CD4-positive, alpha-beta memory T cell (primary cell): ENCODE measurements at regions of chr12 and their contacts with region 1.

Region 1: GRCh38 chr12:39319187-39319586 is 123.7 kb downstream of the KIF21A start:
- DNase-seq: peak in 1 of 5 donors; percentile 14
- H3K4me3 ChIP-seq: no peak overlapping the region
- H3K4me3 Mint-ChIP-seq: no peak overlapping the region
- H3K27ac ChIP-seq: no peak overlapping the region
- H3K27ac Mint-ChIP-seq: peak overlapping the region in 1 of 7 donors; percentile 47
- H3K4me1 ChIP-seq: no peaks in the 10 kb centered on the region
- H3K4me1 Mint-ChIP-seq: peaks cover 0 to 2% (median 0%) of the 10 kb centered on the region in 4 donors
- H3K27me3 ChIP-seq: no peaks in the 10 kb centered on the region
- H3K27me3 Mint-ChIP-seq: no peaks in the 10 kb centered on the region

Region 2: DNA sequence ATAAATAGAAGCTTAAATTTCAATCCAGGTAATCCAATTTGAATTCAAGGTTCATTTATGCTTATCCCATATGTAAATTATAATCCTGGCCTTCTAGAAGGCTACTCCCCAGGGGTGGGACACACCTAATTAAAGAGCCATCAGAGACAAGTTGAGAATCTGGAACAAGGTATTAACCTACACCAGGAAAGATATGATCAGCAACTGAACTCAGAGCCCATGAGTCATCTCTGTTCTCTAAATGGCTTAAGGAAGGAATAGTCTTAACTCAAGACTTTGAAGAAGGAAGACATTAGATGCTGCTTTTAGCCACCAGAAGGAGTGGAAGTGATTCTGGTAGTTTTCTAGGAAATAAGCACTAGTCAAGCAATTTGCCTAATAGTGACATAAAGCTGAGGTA is 35.8 kb after region 1 on chr12:
- CTCF ChIA-PET with region 1: no interaction called
- POLR2A ChIA-PET with region 1: no interaction called
- intact Hi-C with region 1: no loop called
- DNase-seq: no peak
- H3K4me3 ChIP-seq: no peak overlapping the region
- H3K4me3 Mint-ChIP-seq: no peak overlapping the region
- H3K27ac ChIP-seq: no peak overlapping the region
- H3K27ac Mint-ChIP-seq: no peak overlapping the region
- H3K4me1 ChIP-seq: no peaks in the 10 kb centered on the region
- H3K4me1 Mint-ChIP-seq: no peaks in the 10 kb centered on the region
- H3K27me3 ChIP-seq: no peaks in the 10 kb centered on the region
- H3K27me3 Mint-ChIP-seq: no peaks in the 10 kb centered on the region

Region 3: DNA sequence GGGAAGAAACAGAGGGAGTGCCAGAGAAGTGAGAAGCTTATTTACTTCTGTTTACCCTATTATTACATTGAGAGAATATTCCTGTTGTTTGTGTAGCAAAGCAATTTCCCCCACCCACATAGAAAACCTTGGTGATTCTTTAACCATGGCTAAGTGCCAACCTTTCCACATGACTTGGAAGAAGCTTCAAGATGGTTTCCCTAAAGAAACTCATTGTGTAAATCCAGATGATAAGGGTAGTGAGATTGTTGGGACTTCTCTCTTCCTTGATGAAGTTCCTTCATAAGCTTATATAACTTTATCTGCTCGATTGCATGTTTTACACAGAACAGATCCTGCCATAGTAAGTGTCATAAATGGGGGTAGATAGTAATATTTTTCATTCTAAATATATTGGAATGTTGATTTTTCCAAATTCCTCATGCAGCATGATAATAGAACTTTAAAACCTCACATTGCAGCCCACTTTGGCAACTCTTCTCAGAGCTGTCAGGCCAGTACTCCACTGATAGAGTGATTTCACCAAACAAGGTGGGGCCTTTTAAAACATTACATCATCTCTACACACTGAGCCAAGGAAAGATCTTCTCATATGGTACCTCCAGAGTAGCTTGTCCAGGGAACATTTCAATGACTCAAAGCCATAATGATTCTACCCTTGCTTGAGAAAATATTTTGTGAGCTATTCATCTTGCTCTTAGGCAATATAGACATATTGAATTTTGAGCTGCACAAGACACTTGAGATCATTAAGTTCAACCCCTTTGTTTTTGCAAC is 171.5 kb after region 1 on chr12:
- CTCF ChIA-PET with region 1: no interaction called
- POLR2A ChIA-PET with region 1: no interaction called
- intact Hi-C with region 1: no loop called
- DNase-seq: no peak
- H3K4me3 ChIP-seq: no peak overlapping the region
- H3K4me3 Mint-ChIP-seq: no peak overlapping the region
- H3K27ac ChIP-seq: no peak overlapping the region
- H3K27ac Mint-ChIP-seq: no peak overlapping the region
- H3K4me1 ChIP-seq: no peaks in the 10 kb centered on the region
- H3K4me1 Mint-ChIP-seq: no peaks in the 10 kb centered on the region
- H3K27me3 ChIP-seq: no peaks in the 10 kb centered on the region
- H3K27me3 Mint-ChIP-seq: no peaks in the 10 kb centered on the region

Region 4: DNA sequence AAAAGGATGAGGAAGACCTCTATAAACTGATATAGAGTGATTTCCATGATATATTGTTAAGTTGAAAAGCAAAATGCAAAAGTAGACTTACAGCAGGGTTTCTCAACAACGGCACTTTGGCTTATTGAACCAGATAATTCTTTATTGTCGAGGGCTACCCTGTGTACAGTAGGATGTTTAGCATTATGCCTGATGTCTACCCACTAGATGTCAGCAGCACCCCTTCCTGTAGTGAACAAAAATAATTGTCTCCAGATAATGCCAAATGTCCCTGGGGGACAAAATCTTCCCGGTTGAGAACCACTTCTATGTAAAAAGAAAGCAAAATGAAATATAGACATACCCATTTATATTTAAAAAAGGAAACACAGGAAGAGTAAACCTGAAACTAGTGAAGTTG is 268.0 kb after region 1 on chr12:
- CTCF ChIA-PET with region 1: interaction called, 3 read pairs
- POLR2A ChIA-PET with region 1: no interaction called
- intact Hi-C with region 1: loop called (anchors 1 kb)
- DNase-seq: peak; percentile 36 to 50 (median 40)
- H3K4me3 ChIP-seq: no peak overlapping the region
- H3K4me3 Mint-ChIP-seq: no peak overlapping the region
- H3K27ac ChIP-seq: no peak overlapping the region
- H3K27ac Mint-ChIP-seq: no peak overlapping the region
- H3K4me1 ChIP-seq: no peaks in the 10 kb centered on the region
- H3K4me1 Mint-ChIP-seq: peaks cover 3 to 7% (median 5%) of the 10 kb centered on the region in 4 donors
- H3K27me3 ChIP-seq: no peaks in the 10 kb centered on the region
- H3K27me3 Mint-ChIP-seq: no peaks in the 10 kb centered on the region

Region 5: DNA sequence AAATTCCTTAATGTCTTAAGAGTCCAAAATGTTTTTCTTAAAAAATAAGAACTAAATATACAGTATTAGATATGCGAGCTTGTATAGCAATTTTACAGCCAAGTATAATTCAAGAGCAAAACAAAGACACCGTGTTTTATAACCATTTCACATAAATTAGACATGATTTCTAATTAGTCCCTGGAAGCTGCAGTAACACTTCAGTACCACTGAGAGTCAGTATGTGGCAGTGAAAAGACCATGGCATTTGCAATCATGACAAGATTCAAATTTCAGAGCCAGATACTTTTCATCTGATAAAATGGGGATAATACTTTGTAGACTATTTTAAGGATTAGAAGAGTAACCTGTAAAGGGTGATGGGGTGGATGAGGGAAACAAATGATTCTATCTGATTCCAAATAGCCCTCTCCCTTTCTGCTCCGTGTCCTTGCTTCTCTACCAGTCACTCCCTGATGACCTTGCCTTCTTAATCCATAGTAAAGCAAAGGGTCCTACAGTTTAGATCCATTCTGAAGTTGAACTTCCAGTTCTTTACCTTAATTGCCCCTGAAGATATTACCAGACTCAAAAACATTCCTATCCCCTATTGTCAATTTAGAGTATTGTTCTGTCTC is 445.9 kb after region 1 on chr12:
- CTCF ChIA-PET with region 1: no interaction called
- POLR2A ChIA-PET with region 1: no interaction called
- intact Hi-C with region 1: loop called (anchors 5 kb)
- DNase-seq: peak in 4 of 5 donors; percentile 8 to 11 (median 10)
- H3K4me3 ChIP-seq: no peak overlapping the region
- H3K4me3 Mint-ChIP-seq: no peak overlapping the region
- H3K27ac ChIP-seq: no peak overlapping the region
- H3K27ac Mint-ChIP-seq: no peak overlapping the region
- H3K4me1 ChIP-seq: no peaks in the 10 kb centered on the region
- H3K4me1 Mint-ChIP-seq: no peaks in the 10 kb centered on the region
- H3K27me3 ChIP-seq: no peaks in the 10 kb centered on the region
- H3K27me3 Mint-ChIP-seq: peaks cover 0 to 4% of the 10 kb centered on the region in 2 donors

Region 6: GRCh38 chr12:39788235-39788634 is 469.0 kb after region 1 on chr12:
- CTCF ChIA-PET with region 1: no interaction called
- POLR2A ChIA-PET with region 1: no interaction called
- intact Hi-C with region 1: no loop called
- DNase-seq: no peak
- H3K4me3 ChIP-seq: no peak overlapping the region
- H3K4me3 Mint-ChIP-seq: no peak overlapping the region
- H3K27ac ChIP-seq: no peak overlapping the region
- H3K27ac Mint-ChIP-seq: no peak overlapping the region
- H3K4me1 ChIP-seq: no peaks in the 10 kb centered on the region
- H3K4me1 Mint-ChIP-seq: no peaks in the 10 kb centered on the region
- H3K27me3 ChIP-seq: no peaks in the 10 kb centered on the region
- H3K27me3 Mint-ChIP-seq: no peaks in the 10 kb centered on the region